ENCODE measurements at regions of chr22 and their contacts with region 1.

Region 1: GRCh38 chr22:42041784-42042183 is 28.8 kb downstream of the NAGA start:
- DNase-seq: no peak
- H3K4me3 ChIP-seq: no peak overlapping the region
- H3K27ac ChIP-seq: no peak overlapping the region
- H3K4me1 ChIP-seq: no peaks in the 10 kb centered on the region
- H3K27me3 ChIP-seq: no peaks in the 10 kb centered on the region
- CTCF ChIP-seq: no peak

Region 2: GRCh38 chr22:41848468-41848867 is 193.3 kb before region 1 on chr22:
- CTCF ChIA-PET with region 1: no interaction called
- POLR2A ChIA-PET with region 1: interaction called, 10 read pairs
- intact Hi-C with region 1: no loop called
- DNase-seq: no peak
- H3K4me3 ChIP-seq: no peak overlapping the region
- H3K27ac ChIP-seq: peak overlapping the region; percentile 59
- H3K4me1 ChIP-seq: peaks cover 27% of the 10 kb centered on the region
- H3K27me3 ChIP-seq: no peaks in the 10 kb centered on the region
- CTCF ChIP-seq: no peak

Region 3: DNA sequence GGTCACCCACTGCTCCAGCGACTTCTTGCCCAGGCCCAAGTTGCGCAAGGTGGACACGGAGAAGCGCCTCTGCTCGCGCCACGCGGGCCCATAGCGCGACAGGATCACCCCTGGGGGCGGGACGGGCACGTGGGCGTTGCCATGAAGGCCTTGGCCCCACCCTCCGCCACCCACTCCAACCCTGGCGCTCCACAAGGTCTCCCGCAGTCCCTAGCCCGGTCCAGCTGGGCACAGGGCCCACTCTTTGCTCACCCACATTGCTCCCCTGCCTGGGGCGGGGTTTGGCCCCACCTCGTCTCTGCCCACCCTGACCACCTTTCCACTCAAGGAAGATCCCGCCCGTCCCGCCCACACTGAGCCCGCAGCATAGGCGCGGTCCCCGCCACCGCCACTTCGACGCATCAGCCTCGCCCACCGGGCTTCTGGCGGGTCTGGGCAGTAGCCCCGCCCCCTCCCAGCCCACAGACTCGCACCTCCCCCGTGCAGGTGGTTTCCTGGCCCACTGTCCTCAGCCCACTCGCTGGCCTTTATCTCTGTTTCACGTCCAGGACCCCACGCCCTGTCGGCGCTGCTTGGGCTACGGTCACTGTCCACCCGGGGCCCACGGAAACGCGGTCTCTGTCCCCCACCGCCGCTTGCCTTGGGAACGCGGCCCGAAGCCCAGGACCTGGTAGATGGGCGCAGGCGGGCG is 101.1 kb after region 1 on chr22:
- CTCF ChIA-PET with region 1: no interaction called
- POLR2A ChIA-PET with region 1: no interaction called
- intact Hi-C with region 1: no loop called
- DNase-seq: no peak
- H3K4me3 ChIP-seq: no peak overlapping the region
- H3K27ac ChIP-seq: no peak overlapping the region
- H3K4me1 ChIP-seq: no peaks in the 10 kb centered on the region
- H3K27me3 ChIP-seq: no peaks in the 10 kb centered on the region
- CTCF ChIP-seq: no peak

Region 4: GRCh38 chr22:42160830-42161696 is 119.3 kb after region 1 on chr22:
- CTCF ChIA-PET with region 1: no interaction called
- POLR2A ChIA-PET with region 1: no interaction called
- intact Hi-C with region 1: no loop called
- DNase-seq: no peak
- H3K4me3 ChIP-seq: no peak overlapping the region
- H3K27ac ChIP-seq: no peak overlapping the region
- H3K4me1 ChIP-seq: no peaks in the 10 kb centered on the region
- H3K27me3 ChIP-seq: no peaks in the 10 kb centered on the region
- CTCF ChIP-seq: no peak

Region 5: GRCh38 chr22:42528258-42528948 is 486.6 kb after region 1 on chr22:
- CTCF ChIA-PET with region 1: no interaction called
- POLR2A ChIA-PET with region 1: interaction called, 13 read pairs
- intact Hi-C with region 1: no loop called
- DNase-seq: no peak
- H3K4me3 ChIP-seq: no peak overlapping the region
- H3K27ac ChIP-seq: no peak overlapping the region
- H3K4me1 ChIP-seq: no peaks in the 10 kb centered on the region
- H3K27me3 ChIP-seq: no peaks in the 10 kb centered on the region
- CTCF ChIP-seq: no peak

Measured in A673 (cell line).